MCF 10A (cell line): ENCODE measurements at regions of chr12 and their contacts with region 1.

Region 1: GRCh38 chr12:50504798-50505385 is at the start of gene DIP2B:
- DNase-seq: peak; percentile 92
- H3K4me3 Mint-ChIP-seq: peak within 1 kb of the TSS; percentile 97
- H3K27ac Mint-ChIP-seq: peak within 1 kb of the TSS; percentile 87
- H3K4me1 Mint-ChIP-seq: peaks cover 41% of the 10 kb centered on the region
- H3K27me3 Mint-ChIP-seq: no peaks in the 10 kb centered on the region
- CTCF ChIP-seq: peak; percentile 91
- total RNA-seq, gene DIP2B: 18.8 and 19.0 TPM in 2 replicates

Region 2: GRCh38 chr12:50533203-50533584 is 28.3 kb after region 1 on chr12:
- CTCF ChIA-PET with region 1: interaction called, 6 read pairs
- POLR2A ChIA-PET with region 1: interaction called, 95 read pairs
- intact Hi-C with region 1: loop called (anchors 2 kb)
- DNase-seq: no peak
- H3K4me3 Mint-ChIP-seq: no peak overlapping the region
- H3K27ac Mint-ChIP-seq: no peak overlapping the region
- H3K4me1 Mint-ChIP-seq: peaks cover 13% of the 10 kb centered on the region
- H3K27me3 Mint-ChIP-seq: no peaks in the 10 kb centered on the region
- CTCF ChIP-seq: no peak

Region 3: DNA sequence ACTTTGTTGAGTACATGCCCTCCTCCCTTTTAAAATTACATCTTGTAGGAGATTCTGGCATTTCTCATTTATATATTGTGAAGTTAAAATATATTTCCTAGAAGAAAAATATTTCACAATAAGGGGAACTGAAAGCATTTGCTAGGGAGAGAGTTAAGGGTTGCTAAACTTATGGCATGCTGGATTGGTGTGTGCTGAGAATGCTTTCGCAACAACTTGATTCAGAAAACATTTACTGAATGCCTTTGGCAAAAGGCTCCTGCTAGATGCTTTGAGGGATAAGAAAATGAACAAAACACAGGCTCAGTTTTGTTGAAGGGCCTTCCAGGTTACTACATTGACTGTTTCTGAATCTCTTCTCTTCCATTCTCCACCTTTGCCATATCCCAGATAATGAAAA is 67.4 kb after region 1 on chr12:
- CTCF ChIA-PET with region 1: interaction called, 7 read pairs
- POLR2A ChIA-PET with region 1: interaction called, 8 read pairs
- intact Hi-C with region 1: loop called (anchors 2 kb)
- DNase-seq: peak; percentile 84
- H3K4me3 Mint-ChIP-seq: no peak overlapping the region
- H3K27ac Mint-ChIP-seq: peak overlapping the region; percentile 70
- H3K4me1 Mint-ChIP-seq: peaks cover 24% of the 10 kb centered on the region
- H3K27me3 Mint-ChIP-seq: no peaks in the 10 kb centered on the region
- CTCF ChIP-seq: no peak

Region 4: GRCh38 chr12:50637870-50638481 is 133.1 kb after region 1 on chr12:
- CTCF ChIA-PET with region 1: interaction called, 81 read pairs
- POLR2A ChIA-PET with region 1: interaction called, 78 read pairs
- intact Hi-C with region 1: loop called (anchors 1 kb)
- DNase-seq: peak; percentile 36
- H3K4me3 Mint-ChIP-seq: no peak overlapping the region
- H3K27ac Mint-ChIP-seq: no peak overlapping the region
- H3K4me1 Mint-ChIP-seq: peaks cover 18% of the 10 kb centered on the region
- H3K27me3 Mint-ChIP-seq: no peaks in the 10 kb centered on the region
- CTCF ChIP-seq: peak; percentile 40